GM12878 (cell line): ENCODE measurements at regions of chr1 and their contacts with region 1.

Region 1: GRCh38 chr1:11979851-11980675 is at the start of gene MFN2:
- DNase-seq: peak; percentile 83
- ATAC-seq: peak; percentile 96
- H3K4me3 ChIP-seq: peak within 1 kb of the TSS; percentile 99
- H3K27ac ChIP-seq: peak within 1 kb of the TSS; percentile 83
- H3K4me1 ChIP-seq: peaks cover 6% of the 10 kb centered on the region
- H3K27me3 ChIP-seq: no peaks in the 10 kb centered on the region
- CTCF ChIP-seq: no peak
- EP300 ChIP-seq: no peak
- POLR2A ChIP-seq: peak; percentile 92
- RAD21 ChIP-seq: no peak
- polyA plus RNA-seq, gene MFN2: 5.3 to 6.4 TPM

Region 2: DNA sequence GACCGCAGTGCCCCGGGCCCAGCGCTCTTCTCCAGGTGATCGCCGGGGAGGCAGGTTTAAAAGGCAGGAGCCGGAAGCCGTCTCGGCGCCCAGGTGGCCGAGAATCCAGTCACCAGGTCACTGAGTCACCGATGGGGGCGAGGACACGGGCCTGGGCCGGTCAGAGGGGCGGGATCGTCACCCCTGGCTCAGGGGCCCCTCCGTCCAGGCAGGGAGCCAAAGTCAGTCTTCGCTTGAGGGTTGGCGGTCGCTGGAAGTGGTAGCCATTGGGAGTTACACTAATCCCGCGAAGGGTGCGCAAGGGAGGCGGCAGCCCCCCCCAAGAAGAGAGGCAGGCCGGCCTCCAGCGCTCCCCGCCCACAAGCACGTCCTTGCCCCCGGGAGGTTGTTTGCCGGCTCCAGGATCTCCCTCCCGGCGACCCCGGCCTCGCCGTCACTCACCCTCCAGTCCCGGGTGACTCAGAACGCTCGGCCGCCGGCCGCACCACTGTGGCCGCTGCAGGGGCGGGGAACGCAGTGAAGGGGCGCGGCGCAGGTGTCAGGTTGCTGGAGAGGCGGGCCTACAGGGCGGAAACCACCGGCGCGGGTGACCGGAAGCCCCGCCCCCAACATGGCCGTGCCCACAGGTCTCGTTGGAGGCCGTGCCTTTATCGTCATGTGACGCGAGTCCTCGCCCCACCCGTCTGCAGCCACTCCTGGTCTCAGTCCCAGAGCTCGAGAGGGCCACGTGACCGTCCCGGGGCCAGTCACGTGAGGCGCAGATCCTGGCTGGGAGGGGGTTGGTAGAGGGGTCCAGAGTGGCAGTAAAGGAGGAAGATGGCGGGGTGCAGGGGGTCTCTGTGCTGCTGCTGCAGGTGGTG is 174.4 kb before region 1 on chr1 and contains the starts of genes CLCN6 and MTHFR:
- CTCF ChIA-PET with region 1: interaction called, 14 read pairs
- POLR2A ChIA-PET with region 1: no interaction called
- RAD21 ChIA-PET with region 1: no interaction called
- SMC1A ChIA-PET with region 1: no interaction called
- in situ Hi-C with region 1: no loop called
- intact Hi-C with region 1: no loop called
- DNase-seq: peak; percentile 97
- ATAC-seq: peak; percentile 86
- H3K4me3 ChIP-seq: peak within 1 kb of the TSS; percentile 97
- H3K27ac ChIP-seq: peak within 1 kb of the TSS; percentile 88
- H3K4me1 ChIP-seq: peaks cover 11% of the 10 kb centered on the region
- H3K27me3 ChIP-seq: no peaks in the 10 kb centered on the region
- CTCF ChIP-seq: no peak
- EP300 ChIP-seq: peak; percentile 39 to 72; a peak in 3 of 4 replicates
- POLR2A ChIP-seq: peak; percentile 89
- RAD21 ChIP-seq: no peak
- polyA plus RNA-seq, gene CLCN6: 2.2 to 2.4 TPM
- polyA plus RNA-seq, gene MTHFR: 1.0 to 1.2 TPM

Region 3: GRCh38 chr1:11934302-11935056 is 45.6 kb before region 1 on chr1 and contains the start of gene PLOD1:
- CTCF ChIA-PET with region 1: interaction called, 3 read pairs
- POLR2A ChIA-PET with region 1: no interaction called
- RAD21 ChIA-PET with region 1: no interaction called
- SMC1A ChIA-PET with region 1: no interaction called
- in situ Hi-C with region 1: no loop called
- intact Hi-C with region 1: loop called (anchors 2 kb)
- DNase-seq: peak; percentile 65
- ATAC-seq: peak; percentile 99
- H3K4me3 ChIP-seq: peak within 1 kb of the TSS; percentile 89
- H3K27ac ChIP-seq: peak within 1 kb of the TSS; percentile 90
- H3K4me1 ChIP-seq: peaks cover 22% of the 10 kb centered on the region
- H3K27me3 ChIP-seq: no peaks in the 10 kb centered on the region
- CTCF ChIP-seq: no peak
- EP300 ChIP-seq: no peak
- POLR2A ChIP-seq: peak; percentile 85
- RAD21 ChIP-seq: no peak
- polyA plus RNA-seq, gene PLOD1: 10.6 to 11.5 TPM

Region 4: GRCh38 chr1:11961230-11961629 is 18.8 kb before region 1 on chr1:
- CTCF ChIA-PET with region 1: no interaction called
- POLR2A ChIA-PET with region 1: no interaction called
- RAD21 ChIA-PET with region 1: no interaction called
- SMC1A ChIA-PET with region 1: no interaction called
- in situ Hi-C with region 1: no loop called
- intact Hi-C with region 1: no loop called
- DNase-seq: no peak
- ATAC-seq: no peak
- H3K4me3 ChIP-seq: no peak overlapping the region
- H3K27ac ChIP-seq: no peak overlapping the region
- H3K4me1 ChIP-seq: no peaks in the 10 kb centered on the region
- H3K27me3 ChIP-seq: no peaks in the 10 kb centered on the region
- CTCF ChIP-seq: no peak
- EP300 ChIP-seq: no peak
- POLR2A ChIP-seq: no peak
- RAD21 ChIP-seq: no peak

Region 5: DNA sequence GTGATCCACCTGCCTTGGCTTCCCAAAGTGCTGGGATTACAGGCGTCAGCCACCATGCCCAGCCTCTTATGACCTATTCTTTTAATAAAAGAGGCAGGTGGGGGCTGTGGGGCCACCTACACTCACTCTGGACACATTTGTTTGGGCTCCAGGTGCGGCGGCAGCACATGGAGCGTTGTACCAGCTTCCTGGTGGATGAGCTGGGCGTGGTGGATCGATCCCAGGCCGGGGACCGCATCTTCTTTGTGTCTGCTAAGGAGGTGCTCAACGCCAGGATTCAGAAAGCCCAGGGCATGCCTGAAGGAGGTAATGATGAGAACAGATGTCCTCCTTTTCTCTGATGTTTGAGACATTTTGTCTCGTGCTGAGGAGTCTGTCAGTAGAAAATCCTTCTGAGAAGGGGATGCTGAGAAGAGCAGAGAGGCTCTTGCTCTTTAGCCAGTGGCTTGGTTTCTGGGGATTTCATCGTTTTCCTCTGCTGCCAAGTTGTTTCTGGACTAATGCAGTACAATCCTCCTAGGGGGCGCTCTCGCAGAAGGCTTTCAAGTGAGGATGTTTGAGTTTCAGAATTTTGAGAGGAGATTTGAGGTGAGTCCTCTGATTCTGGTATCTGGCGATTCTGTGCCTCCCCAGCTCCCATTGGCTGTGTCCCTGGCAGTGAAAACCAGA is 21.3 kb after region 1 on chr1:
- CTCF ChIA-PET with region 1: interaction called, 4 read pairs
- POLR2A ChIA-PET with region 1: interaction called, 10 read pairs
- RAD21 ChIA-PET with region 1: no interaction called
- SMC1A ChIA-PET with region 1: interaction called, 3 read pairs
- in situ Hi-C with region 1: no loop called
- intact Hi-C with region 1: no loop called
- DNase-seq: no peak
- ATAC-seq: peak; percentile 27
- H3K4me3 ChIP-seq: no peak overlapping the region
- H3K27ac ChIP-seq: no peak overlapping the region
- H3K4me1 ChIP-seq: peaks cover 22% of the 10 kb centered on the region
- H3K27me3 ChIP-seq: no peaks in the 10 kb centered on the region
- CTCF ChIP-seq: peak; percentile 64 to 73 (median 67)
- EP300 ChIP-seq: no peak
- POLR2A ChIP-seq: no peak
- RAD21 ChIP-seq: peak; percentile 70

Region 6: DNA sequence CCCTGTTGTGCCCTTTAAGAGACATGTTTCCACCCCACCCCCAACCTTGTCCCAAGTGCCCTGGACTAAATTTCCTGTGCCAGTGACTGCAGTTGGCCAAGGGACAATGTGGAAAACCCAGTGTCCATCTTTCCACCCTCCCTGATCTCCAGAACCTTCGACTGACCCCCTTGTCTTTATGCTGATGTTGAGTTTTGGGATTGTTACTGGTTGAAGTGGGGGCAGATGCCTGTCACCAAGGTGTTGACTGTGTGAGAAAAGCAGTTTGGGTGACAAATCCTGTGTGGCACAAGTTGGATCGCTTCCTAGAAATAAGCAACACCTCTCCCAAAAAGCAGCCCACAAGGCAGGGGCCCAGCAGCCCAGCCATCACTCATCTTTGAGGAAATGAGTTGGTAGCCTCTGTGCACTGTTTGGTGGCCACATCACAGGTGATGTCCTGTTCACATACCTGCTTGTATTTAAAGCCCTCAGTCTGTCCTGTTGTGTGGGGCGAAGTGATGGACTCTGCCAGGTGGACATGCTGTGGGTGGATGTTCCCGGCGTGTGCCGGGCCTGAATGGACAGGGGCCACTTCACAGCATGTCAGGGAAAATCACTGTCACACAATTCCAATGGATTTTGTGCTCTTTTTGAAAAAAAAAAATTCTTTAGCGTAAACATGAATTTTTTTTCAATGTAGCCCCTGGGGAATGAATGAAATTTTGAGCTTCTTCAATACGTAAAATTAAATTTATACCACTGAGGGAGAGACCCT is 32.7 kb after region 1 on chr1:
- CTCF ChIA-PET with region 1: no interaction called
- POLR2A ChIA-PET with region 1: no interaction called
- RAD21 ChIA-PET with region 1: no interaction called
- SMC1A ChIA-PET with region 1: no interaction called
- in situ Hi-C with region 1: no loop called
- intact Hi-C with region 1: no loop called
- DNase-seq: no peak
- ATAC-seq: no peak
- H3K4me3 ChIP-seq: no peak overlapping the region
- H3K27ac ChIP-seq: no peak overlapping the region
- H3K4me1 ChIP-seq: no peaks in the 10 kb centered on the region
- H3K27me3 ChIP-seq: no peaks in the 10 kb centered on the region
- CTCF ChIP-seq: no peak
- EP300 ChIP-seq: no peak
- POLR2A ChIP-seq: no peak
- RAD21 ChIP-seq: no peak